ENCODE measurements at regions of chr14 and their contacts with region 1.

Region 1: DNA sequence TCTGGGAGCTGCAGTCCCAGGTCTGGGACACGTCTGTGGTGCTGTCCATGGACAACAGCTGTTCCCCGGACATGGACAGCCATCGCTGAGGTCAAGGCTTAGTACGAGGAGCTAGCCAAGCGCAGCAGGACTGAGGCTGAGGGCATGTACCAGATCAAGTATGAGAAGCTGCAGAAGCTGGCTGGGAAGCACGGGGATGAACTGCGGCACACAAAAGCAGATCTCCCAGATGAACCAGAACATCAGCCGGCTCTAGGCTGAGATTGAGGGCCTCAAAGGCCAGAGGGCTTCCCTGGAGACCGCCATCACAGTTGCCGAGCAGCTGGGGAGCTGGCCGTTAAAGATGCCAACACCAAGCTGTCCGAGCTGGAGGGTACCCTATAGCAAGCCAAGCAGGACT is 375.3 kb downstream of the SEC23A start:
- DNase-seq: no peak
- H3K4me3 ChIP-seq: no peak overlapping the region
- H3K27ac ChIP-seq: no peak overlapping the region
- H3K4me1 ChIP-seq: no peaks in the 10 kb centered on the region
- H3K27me3 ChIP-seq: no peaks in the 10 kb centered on the region
- CTCF ChIP-seq: no peak
- EP300 ChIP-seq: no peak
- POLR2A ChIP-seq: no peak

Region 2: GRCh38 chr14:38867561-38868150 is 139.9 kb after region 1 on chr14:
- in situ Hi-C with region 1: loop called in 3 of 4 experiments (anchors 5 kb)
- intact Hi-C with region 1: no loop called
- DNase-seq: peak; percentile 78
- H3K4me3 ChIP-seq: no peak overlapping the region
- H3K27ac ChIP-seq: no peak overlapping the region
- H3K4me1 ChIP-seq: peaks cover 0 to 42% (median 10%) of the 10 kb centered on the region in 4 donors
- H3K27me3 ChIP-seq: no peaks in the 10 kb centered on the region
- CTCF ChIP-seq: peak; percentile 73 to 85 (median 79)
- EP300 ChIP-seq: no peak
- POLR2A ChIP-seq: no peak

Region 3: GRCh38 chr14:39233680-39234326 is 506.1 kb after region 1 on chr14 and contains the start of gene MIA2:
- in situ Hi-C with region 1: no loop called
- intact Hi-C with region 1: no loop called
- DNase-seq: no peak
- H3K4me3 ChIP-seq: peak within 1 kb of the TSS in 2 of 4 donors; percentile 6 to 19
- H3K27ac ChIP-seq: peak within 1 kb of the TSS in 2 of 4 donors; percentile 15 to 16
- H3K4me1 ChIP-seq: peaks cover 0 to 20% (median 4%) of the 10 kb centered on the region in 4 donors
- H3K27me3 ChIP-seq: no peaks in the 10 kb centered on the region
- CTCF ChIP-seq: no peak
- EP300 ChIP-seq: no peak
- POLR2A ChIP-seq: no peak
- total RNA-seq, gene MIA2: 54.1 to 83.0 (median 71.4) TPM

Measured in transverse colon (tissue), 4 donors.